ENCODE measurements at regions of chr3 and their contacts with region 1.

Region 1: DNA sequence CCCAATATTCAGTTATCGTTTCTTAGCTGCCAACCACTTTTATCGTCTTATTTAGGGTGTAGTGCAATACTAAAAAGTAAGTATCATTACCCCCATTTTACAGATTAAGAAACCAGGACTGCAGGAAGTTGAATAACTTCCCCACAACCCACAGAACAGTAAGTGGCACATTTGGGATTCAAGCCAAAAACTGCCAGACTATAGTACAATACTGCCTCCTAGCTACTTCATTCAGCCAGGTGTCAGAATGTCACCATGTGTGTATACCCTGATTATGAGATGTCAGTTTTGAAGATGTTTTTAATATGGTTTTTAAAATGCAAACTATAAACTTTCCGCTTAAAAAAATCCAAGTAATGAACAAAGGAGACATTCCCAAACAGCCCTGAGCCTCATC is 74.2 kb upstream of the PROK2 start:
- DNase-seq: peak; percentile 22
- ATAC-seq: peak; percentile 91
- H3K4me3 Mint-ChIP-seq: no peak overlapping the region
- H3K27ac Mint-ChIP-seq: no peak overlapping the region
- H3K4me1 Mint-ChIP-seq: peaks cover 10% of the 10 kb centered on the region
- H3K27me3 Mint-ChIP-seq: peaks cover 11% of the 10 kb centered on the region

Region 2: GRCh38 chr3:71710906-71711494 is 148.1 kb before region 1 on chr3:
- CTCF ChIA-PET with region 1: interaction called, 24 read pairs
- POLR2A ChIA-PET with region 1: no interaction called
- intact Hi-C with region 1: loop called (anchors 1 kb)
- DNase-seq: no peak
- ATAC-seq: peak; percentile 81
- H3K4me3 Mint-ChIP-seq: no peak overlapping the region
- H3K27ac Mint-ChIP-seq: peak overlapping the region; percentile 51
- H3K4me1 Mint-ChIP-seq: peaks cover 74% of the 10 kb centered on the region
- H3K27me3 Mint-ChIP-seq: no peaks in the 10 kb centered on the region

Region 3: DNA sequence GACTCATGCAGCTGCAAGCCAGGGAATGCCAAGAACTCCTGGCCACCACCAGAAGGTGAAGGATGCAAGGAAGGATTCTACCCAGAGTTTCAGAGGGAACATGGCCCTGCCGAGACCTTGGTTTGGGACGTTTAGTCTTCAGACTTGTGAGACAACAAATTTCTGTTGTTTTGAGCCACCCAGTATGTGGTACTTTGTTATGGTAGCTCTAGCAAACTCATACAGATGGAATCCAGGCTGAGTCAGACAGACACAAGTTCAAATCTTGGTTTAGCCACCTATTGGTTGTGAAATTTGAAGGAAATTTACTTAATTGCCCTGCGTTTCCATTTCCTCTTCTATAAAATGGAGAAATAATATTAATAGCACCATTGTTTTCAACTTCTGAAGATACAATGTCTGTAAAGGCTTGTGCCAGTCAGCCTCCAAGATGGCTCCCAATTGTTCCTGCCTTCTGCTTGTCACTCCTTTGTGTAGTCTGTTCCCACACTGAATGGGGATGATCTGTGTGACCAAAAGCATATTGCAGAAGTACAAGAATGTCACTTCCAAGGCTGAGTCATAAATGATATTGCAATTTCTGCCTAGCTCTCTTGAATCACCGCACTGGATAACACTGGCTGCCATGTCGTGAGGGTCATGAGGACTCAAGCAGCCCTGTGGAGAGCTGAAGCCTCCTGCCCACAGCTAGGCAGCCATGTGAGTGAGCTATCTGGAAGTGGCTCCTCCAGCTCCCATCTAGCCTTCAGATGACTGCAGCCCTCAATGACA is 149.3 kb after region 1 on chr3:
- CTCF ChIA-PET with region 1: no interaction called
- POLR2A ChIA-PET with region 1: no interaction called
- intact Hi-C with region 1: no loop called
- DNase-seq: no peak
- ATAC-seq: no peak
- H3K4me3 Mint-ChIP-seq: no peak overlapping the region
- H3K27ac Mint-ChIP-seq: no peak overlapping the region
- H3K4me1 Mint-ChIP-seq: peaks cover 16% of the 10 kb centered on the region
- H3K27me3 Mint-ChIP-seq: peaks cover 14% of the 10 kb centered on the region

Region 4: GRCh38 chr3:72359738-72360137 is 500.6 kb after region 1 on chr3:
- CTCF ChIA-PET with region 1: no interaction called
- POLR2A ChIA-PET with region 1: no interaction called
- intact Hi-C with region 1: no loop called
- DNase-seq: no peak
- ATAC-seq: no peak
- H3K4me3 Mint-ChIP-seq: no peak overlapping the region
- H3K27ac Mint-ChIP-seq: no peak overlapping the region
- H3K4me1 Mint-ChIP-seq: peaks cover 2% of the 10 kb centered on the region
- H3K27me3 Mint-ChIP-seq: no peaks in the 10 kb centered on the region

Measured in activated CD4-positive, alpha-beta T cell treated with anti-CD3 and anti-CD28 coated beads for 36 hours (primary cell).